GM12878 (cell line): ENCODE measurements at regions of chr19 and their contacts with region 1.

Region 1: GRCh38 chr19:41548954-41549688 is 26.8 kb upstream of the CEACAM21 start:
- DNase-seq: no peak
- ATAC-seq: peak; percentile 68
- H3K4me3 ChIP-seq: peak overlapping the region; percentile 83
- H3K27ac ChIP-seq: peak overlapping the region; percentile 96
- H3K4me1 ChIP-seq: peaks cover 36% of the 10 kb centered on the region
- H3K27me3 ChIP-seq: no peaks in the 10 kb centered on the region
- CTCF ChIP-seq: no peak
- EP300 ChIP-seq: no peak
- POLR2A ChIP-seq: peak; percentile 92
- RAD21 ChIP-seq: no peak

Region 2: DNA sequence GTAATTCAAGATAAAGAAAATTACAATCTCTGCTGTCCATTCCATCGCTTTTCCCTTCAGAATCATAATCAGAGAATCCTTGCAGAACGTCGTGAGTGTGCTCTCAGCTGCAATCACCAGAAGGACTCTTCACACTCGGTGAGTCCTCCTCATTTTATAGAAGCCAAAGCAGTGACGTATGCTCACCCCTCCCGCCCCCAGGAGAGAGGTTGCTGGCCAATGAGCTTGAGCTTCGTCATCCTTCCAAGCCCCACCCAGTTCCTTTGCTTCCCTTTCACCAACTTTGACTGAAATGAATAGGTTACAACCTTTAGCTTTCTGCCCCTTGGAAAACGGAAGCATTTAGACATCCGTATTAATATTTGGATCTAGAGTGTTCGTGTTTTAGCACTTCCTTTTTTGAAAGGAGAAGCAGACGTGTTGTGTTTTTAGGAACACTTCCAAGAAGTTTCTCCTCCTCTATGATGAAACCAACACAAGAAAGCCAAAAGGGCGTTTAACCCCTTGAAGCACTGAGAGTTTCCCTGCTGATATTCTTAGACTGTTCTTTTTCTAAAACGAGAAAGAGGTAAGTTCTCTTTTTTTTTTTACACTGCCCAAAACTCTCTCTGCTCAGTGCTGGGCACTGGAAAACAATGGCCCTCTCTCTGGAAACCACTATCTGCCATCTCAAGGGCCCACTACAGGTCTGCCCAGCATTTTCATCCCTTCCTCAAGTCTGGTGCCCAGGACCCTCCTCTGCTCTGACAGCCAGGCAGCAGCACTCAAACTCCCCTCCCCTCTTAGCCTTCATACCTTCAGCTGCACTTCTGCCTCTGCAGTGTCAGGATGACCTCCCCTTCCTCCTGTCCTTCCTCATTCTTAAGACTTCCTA is 17.4 kb before region 1 on chr19:
- CTCF ChIA-PET with region 1: interaction called, 549 read pairs
- POLR2A ChIA-PET with region 1: interaction called, 5 read pairs
- RAD21 ChIA-PET with region 1: interaction called, 5 read pairs
- SMC1A ChIA-PET with region 1: interaction called, 14 read pairs
- in situ Hi-C with region 1: no loop called
- intact Hi-C with region 1: no loop called
- DNase-seq: no peak
- ATAC-seq: peak; percentile 61
- H3K4me3 ChIP-seq: peak overlapping the region; percentile 65
- H3K27ac ChIP-seq: peak overlapping the region; percentile 76
- H3K4me1 ChIP-seq: peaks cover 56% of the 10 kb centered on the region
- H3K27me3 ChIP-seq: no peaks in the 10 kb centered on the region
- CTCF ChIP-seq: no peak
- EP300 ChIP-seq: no peak
- POLR2A ChIP-seq: peak; percentile 96
- RAD21 ChIP-seq: no peak

Region 3: GRCh38 chr19:42023121-42023942 is 474.2 kb after region 1 on chr19:
- CTCF ChIA-PET with region 1: no interaction called
- POLR2A ChIA-PET with region 1: no interaction called
- RAD21 ChIA-PET with region 1: no interaction called
- SMC1A ChIA-PET with region 1: no interaction called
- in situ Hi-C with region 1: no loop called
- intact Hi-C with region 1: no loop called
- DNase-seq: no peak
- ATAC-seq: peak; percentile 85
- H3K4me3 ChIP-seq: no peak overlapping the region
- H3K27ac ChIP-seq: no peak overlapping the region
- H3K4me1 ChIP-seq: no peaks in the 10 kb centered on the region
- H3K27me3 ChIP-seq: peaks cover 0 to 2% of the 10 kb centered on the region in 2 experiments; a peak in 2 of 4 replicates
- CTCF ChIP-seq: peak; percentile 42 to 62 (median 58)
- EP300 ChIP-seq: no peak
- POLR2A ChIP-seq: no peak
- RAD21 ChIP-seq: no peak